ENCODE measurements at regions of chr5 and their contacts with region 1.

Region 1: DNA sequence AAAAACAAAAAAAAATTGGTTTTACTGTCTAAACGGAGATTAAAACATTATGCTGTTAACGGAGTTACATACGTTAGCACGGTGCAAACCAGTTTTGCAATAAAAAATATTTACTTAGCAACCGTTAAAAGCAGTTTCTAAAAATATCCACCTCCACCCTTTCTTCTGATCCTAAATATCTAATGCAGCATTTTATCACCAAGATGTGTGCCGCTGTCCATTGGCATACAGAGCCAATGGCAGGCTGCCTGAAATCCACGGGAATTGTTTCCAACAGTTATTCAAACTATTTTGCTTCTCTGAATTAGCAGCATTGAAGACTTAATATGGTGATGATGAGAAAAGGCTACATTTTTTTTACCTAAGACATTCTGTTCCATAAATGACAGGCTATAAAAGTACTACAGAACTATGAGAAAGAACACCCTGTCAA is 61.6 kb downstream of the CSNK1A1 start:
- DNase-seq: no peak
- H3K4me3 Mint-ChIP-seq: no peak overlapping the region
- H3K27ac Mint-ChIP-seq: no peak overlapping the region
- H3K4me1 Mint-ChIP-seq: no peaks in the 10 kb centered on the region
- H3K27me3 Mint-ChIP-seq: no peaks in the 10 kb centered on the region

Region 2: DNA sequence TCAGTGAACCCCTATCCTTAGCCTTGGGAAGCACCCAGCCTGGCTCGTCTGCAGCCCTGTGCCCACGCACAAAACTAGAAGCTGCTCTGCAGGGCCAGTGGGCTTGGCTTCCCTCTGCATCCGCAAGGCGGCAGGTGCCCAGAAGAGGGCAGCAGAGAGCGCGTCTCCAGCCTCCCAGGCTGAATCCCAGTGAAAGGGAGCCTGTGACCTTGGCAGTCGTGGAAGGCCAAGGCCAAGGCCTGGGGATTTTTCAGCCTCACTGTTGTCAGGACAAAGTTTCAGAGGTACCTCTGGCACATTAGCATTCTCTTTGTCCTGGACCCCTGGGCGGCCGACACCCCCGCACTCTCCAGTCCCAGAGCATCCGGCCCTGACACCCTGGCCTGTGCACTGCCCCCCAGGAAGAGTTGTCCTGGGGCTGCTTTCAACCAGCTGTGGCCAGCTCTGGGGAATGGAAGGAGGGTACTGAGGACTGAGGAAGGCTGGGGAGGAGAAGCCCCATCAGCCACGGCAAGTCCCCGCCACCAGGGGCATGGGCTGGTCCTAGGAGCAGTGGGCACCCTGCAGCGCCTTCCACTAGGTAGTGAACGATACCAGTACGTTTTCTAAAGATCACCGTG is 46.9 kb before region 1 on chr5:
- intact Hi-C with region 1: loop called (anchors 5 kb)
- DNase-seq: peak; percentile 52
- H3K4me3 Mint-ChIP-seq: no peak overlapping the region
- H3K27ac Mint-ChIP-seq: peak overlapping the region; percentile 69
- H3K4me1 Mint-ChIP-seq: peaks cover 25% of the 10 kb centered on the region
- H3K27me3 Mint-ChIP-seq: no peaks in the 10 kb centered on the region

Measured in activated T-helper 1 cell treated with anti-CD3 and anti-CD28 coated beads, Interleukin-12 subunit alpha, Interleukin-12 subunit beta, Interleukin-2, Interleukin-4 antibody, amounts not matched to agents 30 ng/mL and 10 ng/mL and 1 ng/mL, durations not matched to agents 14 hours and 24 hours and 36 hours (primary cell).